ENCODE measurements at regions of chr13 and their contacts with region 1.

Region 1: GRCh38 chr13:38417727-38418126 is 68.1 kb downstream of the UFM1 start:
- DNase-seq: peak; percentile 50
- H3K4me3 ChIP-seq: no peak overlapping the region
- H3K27ac ChIP-seq: no peak overlapping the region
- H3K4me1 ChIP-seq: peaks cover 13% of the 10 kb centered on the region
- H3K27me3 ChIP-seq: no peaks in the 10 kb centered on the region
- CTCF ChIP-seq: peak; percentile 71 to 75

Region 2: GRCh38 chr13:38045307-38046048 is 372.2 kb before region 1 on chr13:
- CTCF ChIA-PET with region 1: no interaction called
- dilution Hi-C with region 1: no loop called
- in situ Hi-C with region 1: no loop called
- intact Hi-C with region 1: loop called (anchors 1 kb)
- DNase-seq: peak; percentile 27
- H3K4me3 ChIP-seq: no peak overlapping the region
- H3K27ac ChIP-seq: no peak overlapping the region
- H3K4me1 ChIP-seq: no peaks in the 10 kb centered on the region
- H3K27me3 ChIP-seq: no peaks in the 10 kb centered on the region
- CTCF ChIP-seq: peak; percentile 56 to 71

Region 3: GRCh38 chr13:38073931-38074330 is 343.8 kb before region 1 on chr13:
- CTCF ChIA-PET with region 1: no interaction called
- dilution Hi-C with region 1: no loop called
- in situ Hi-C with region 1: no loop called
- intact Hi-C with region 1: loop called (anchors 10 kb)
- DNase-seq: no peak
- H3K4me3 ChIP-seq: no peak overlapping the region
- H3K27ac ChIP-seq: no peak overlapping the region
- H3K4me1 ChIP-seq: no peaks in the 10 kb centered on the region
- H3K27me3 ChIP-seq: no peaks in the 10 kb centered on the region
- CTCF ChIP-seq: no peak

Region 4: GRCh38 chr13:38228322-38228721 is 189.4 kb before region 1 on chr13:
- CTCF ChIA-PET with region 1: no interaction called
- dilution Hi-C with region 1: no loop called
- in situ Hi-C with region 1: no loop called
- intact Hi-C with region 1: no loop called
- DNase-seq: no peak
- H3K4me3 ChIP-seq: no peak overlapping the region
- H3K27ac ChIP-seq: no peak overlapping the region
- H3K4me1 ChIP-seq: no peaks in the 10 kb centered on the region
- H3K27me3 ChIP-seq: no peaks in the 10 kb centered on the region
- CTCF ChIP-seq: no peak

Region 5: GRCh38 chr13:38328699-38329098 is 89.0 kb before region 1 on chr13:
- CTCF ChIA-PET with region 1: no interaction called
- dilution Hi-C with region 1: no loop called
- in situ Hi-C with region 1: no loop called
- intact Hi-C with region 1: no loop called
- DNase-seq: no peak
- H3K4me3 ChIP-seq: no peak overlapping the region
- H3K27ac ChIP-seq: no peak overlapping the region
- H3K4me1 ChIP-seq: peaks cover 5% of the 10 kb centered on the region
- H3K27me3 ChIP-seq: no peaks in the 10 kb centered on the region
- CTCF ChIP-seq: no peak

Region 6: DNA sequence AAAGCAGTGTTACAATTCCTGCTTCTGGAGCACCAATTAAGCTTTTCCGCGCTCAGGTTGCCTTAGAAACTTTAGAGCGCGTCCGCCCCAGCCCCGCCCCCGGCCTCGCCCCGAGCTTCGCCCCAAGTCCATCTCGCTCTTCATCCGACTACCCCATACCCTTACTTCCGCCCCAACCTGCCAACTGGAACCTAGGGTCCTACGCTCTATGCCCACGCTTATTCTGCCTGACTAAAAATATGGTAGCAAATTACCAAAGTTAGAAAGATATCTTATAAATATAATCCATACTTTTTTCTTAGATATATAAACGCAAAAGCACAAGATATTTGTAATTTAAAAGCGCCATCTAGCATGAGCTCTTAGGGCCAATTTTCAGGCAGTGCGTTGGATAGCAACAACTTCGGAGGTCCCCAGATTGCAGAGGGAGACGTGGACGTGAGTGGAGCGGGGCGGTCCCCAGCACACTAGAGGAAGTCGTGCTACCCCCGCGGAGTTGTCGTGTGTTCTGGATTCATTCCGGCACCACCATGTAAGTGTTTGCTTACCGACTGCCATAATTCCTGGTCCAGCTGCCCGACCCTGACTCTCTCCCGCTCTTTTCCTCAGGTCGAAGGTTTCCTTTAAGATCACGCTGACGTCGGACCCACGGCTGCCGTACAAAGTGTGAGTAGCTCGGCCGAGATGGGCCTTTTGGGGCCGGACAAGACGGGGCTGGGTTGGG is 68.2 kb before region 1 on chr13 and contains the start of gene UFM1:
- CTCF ChIA-PET with region 1: no interaction called
- dilution Hi-C with region 1: no loop called
- in situ Hi-C with region 1: no loop called
- intact Hi-C with region 1: loop called (anchors 5 kb)
- DNase-seq: peak; percentile 90
- H3K4me3 ChIP-seq: peak within 1 kb of the TSS; percentile 68 to 90 (median 74)
- H3K27ac ChIP-seq: peak within 1 kb of the TSS; percentile 98
- H3K4me1 ChIP-seq: peaks cover 21% of the 10 kb centered on the region
- H3K27me3 ChIP-seq: no peaks in the 10 kb centered on the region
- CTCF ChIP-seq: no peak
- total RNA-seq, gene UFM1: 67.4 to 97.5 TPM

Region 7: DNA sequence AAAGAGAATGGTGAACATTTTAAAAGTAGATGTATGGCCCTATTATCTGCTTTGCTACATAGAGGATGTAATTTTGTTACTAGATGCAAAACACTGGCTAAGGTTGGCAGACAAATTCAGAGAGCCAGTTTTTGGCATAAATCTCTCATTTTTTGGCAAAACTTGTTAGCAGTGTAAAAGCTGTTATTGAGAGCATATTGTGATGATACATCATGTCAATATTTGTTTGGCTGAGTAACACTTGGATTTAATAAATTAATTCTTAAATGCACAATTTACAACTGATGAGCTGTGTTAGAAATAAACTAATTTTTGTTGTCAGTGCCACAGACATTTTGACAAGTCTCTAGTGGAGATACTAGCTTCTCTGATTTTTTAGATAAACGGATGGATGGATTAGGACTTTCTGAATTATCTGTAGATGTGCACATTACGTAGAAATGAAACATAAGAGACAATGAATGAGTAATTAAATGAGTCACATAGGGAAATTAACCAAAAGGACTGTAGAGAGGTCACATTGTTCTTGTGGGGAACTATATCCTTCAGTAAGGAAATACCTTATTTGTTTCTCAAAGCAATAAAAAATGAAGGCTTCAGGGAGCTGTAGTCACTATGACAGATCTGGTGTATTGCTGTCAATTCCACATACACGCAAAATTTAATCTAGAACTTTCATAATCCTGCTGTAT is 50.6 kb before region 1 on chr13:
- CTCF ChIA-PET with region 1: no interaction called
- dilution Hi-C with region 1: no loop called
- in situ Hi-C with region 1: no loop called
- intact Hi-C with region 1: loop called (anchors 5 kb)
- DNase-seq: peak; percentile 74
- H3K4me3 ChIP-seq: no peak overlapping the region
- H3K27ac ChIP-seq: no peak overlapping the region
- H3K4me1 ChIP-seq: peaks cover 14% of the 10 kb centered on the region
- H3K27me3 ChIP-seq: no peaks in the 10 kb centered on the region
- CTCF ChIP-seq: no peak

Measured in mammary epithelial cell (primary cell).